Tibial artery (tissue), 4 donors: ENCODE measurements at regions of chr15 and their contacts with region 1.

Region 1: GRCh38 chr15:73972984-73973682 is 19.0 kb downstream of the STOML1 start:
- DNase-seq: peak; percentile 84 to 88
- H3K4me3 ChIP-seq: no peak overlapping the region
- H3K27ac ChIP-seq: no peak overlapping the region
- H3K4me1 ChIP-seq: peaks cover 0 to 13% (median 5%) of the 10 kb centered on the region in 4 donors
- H3K27me3 ChIP-seq: no peaks in the 10 kb centered on the region
- CTCF ChIP-seq: peak; percentile 88 to 93

Region 2: DNA sequence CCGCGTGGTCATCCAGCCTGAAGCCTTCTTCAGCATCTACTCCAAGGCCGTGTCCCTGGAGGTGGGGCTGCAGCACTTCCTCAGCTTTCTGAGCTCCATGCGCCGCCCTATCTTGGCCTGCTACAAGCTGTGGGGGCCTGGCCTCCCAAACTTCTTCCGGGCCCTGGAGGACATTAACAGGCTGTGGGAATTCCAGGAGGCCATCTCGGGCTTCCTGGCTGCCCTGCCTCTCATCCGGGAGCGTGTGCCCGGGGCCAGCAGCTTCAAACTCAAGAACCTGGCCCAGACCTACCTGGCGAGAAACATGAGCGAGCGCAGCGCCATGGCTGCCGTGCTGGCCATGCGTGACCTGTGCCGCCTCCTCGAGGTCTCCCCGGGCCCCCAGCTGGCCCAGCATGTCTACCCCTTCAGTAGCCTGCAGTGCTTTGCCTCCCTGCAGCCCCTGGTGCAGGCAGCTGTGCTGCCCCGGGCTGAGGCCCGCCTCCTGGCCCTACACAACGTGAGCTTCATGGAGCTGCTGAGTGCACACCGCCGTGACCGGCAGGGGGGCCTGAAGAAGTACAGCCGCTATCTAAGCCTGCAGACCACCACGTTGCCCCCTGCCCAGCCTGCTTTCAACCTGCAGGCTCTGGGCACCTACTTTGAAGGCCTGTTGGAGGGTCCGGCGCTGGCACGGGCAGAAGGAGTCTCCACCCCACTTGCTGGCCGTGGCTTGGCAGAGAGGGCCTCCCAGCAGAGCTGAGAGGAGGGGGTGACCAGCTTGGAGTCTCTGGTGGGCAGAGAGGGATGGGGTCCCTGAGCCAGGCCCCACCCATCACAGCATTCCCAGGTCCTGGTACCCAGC is 71.4 kb after region 1 on chr15:
- intact Hi-C with region 1: loop called (anchors 2 kb)
- DNase-seq: peak; percentile 64 to 78
- H3K4me3 ChIP-seq: no peak overlapping the region
- H3K27ac ChIP-seq: peak overlapping the region; percentile 18 to 40
- H3K4me1 ChIP-seq: peaks cover 4 to 40% (median 15%) of the 10 kb centered on the region in 4 donors
- H3K27me3 ChIP-seq: no peaks in the 10 kb centered on the region
- CTCF ChIP-seq: no peak